ENCODE measurements at regions of chr1 and their contacts with region 1.

Region 1: DNA sequence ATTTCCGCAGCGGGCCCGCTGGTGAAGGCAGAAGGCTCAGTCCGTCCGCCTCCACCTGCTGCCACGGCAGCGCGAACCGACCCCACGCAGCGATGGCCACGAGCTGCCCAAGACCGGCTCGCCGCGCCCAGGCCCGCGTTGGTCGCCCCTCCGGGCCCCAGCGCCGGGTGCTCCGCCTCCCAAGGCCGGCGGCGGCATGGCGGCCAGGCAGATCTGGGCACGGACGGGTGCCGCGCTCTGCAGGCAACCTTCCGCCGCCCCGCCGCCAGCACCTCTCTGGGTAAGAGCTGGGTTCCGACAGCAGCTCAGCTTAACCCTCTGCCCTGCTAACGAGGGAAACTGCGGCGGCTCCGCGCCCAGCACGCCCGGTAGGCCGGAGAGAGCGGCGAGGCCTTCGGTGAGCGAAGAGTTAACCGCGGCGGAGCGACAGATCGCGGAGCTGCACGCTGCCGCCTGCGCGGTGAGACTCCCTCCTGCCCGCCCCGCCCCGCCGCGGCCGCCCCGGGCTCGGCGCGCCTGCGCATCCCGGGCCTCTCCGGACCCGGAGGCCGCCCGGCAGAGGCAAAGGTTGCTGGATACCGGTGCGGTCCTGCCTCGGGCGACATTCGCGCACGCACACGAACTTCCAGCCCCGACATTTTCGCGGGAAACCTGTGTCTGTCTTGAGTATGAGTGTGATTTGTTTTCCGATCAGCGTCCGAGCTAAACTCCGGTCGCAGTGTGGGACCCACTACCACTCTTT is at the start of gene C1orf53:
- DNase-seq: peak; percentile 92
- H3K4me3 Mint-ChIP-seq: peak within 1 kb of the TSS; percentile 86
- H3K27ac Mint-ChIP-seq: peak within 1 kb of the TSS; percentile 93
- H3K4me1 Mint-ChIP-seq: peaks cover 26% of the 10 kb centered on the region
- H3K27me3 Mint-ChIP-seq: no peaks in the 10 kb centered on the region
- CTCF ChIP-seq: no peak
- total RNA-seq, gene C1orf53: 10.7 and 15.1 TPM in 2 replicates

Region 2: DNA sequence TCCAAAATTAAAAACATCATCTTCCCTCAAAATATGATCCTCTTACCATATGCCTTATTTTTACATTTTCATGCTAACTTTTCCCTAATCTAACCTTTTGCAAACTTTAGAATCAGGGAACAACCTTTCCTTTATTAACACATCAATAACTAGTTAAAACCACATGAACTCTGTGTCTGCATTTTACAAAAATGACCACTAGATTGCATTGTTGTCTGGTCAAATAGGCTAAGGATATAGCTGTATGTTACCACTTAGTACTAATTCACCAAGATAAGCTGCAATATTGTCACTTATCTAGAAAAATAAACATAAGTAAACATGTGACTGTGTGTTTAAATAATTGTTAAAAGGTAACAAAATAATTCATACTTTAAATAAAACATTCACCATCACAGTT is 209.7 kb before region 1 on chr1:
- CTCF ChIA-PET with region 1: interaction called, 4 read pairs
- POLR2A ChIA-PET with region 1: interaction called, 22 read pairs
- intact Hi-C with region 1: no loop called
- DNase-seq: peak; percentile 46
- H3K4me3 Mint-ChIP-seq: no peak overlapping the region
- H3K27ac Mint-ChIP-seq: no peak overlapping the region
- H3K4me1 Mint-ChIP-seq: peaks cover 19% of the 10 kb centered on the region
- H3K27me3 Mint-ChIP-seq: no peaks in the 10 kb centered on the region
- CTCF ChIP-seq: peak; percentile 61

Region 3: GRCh38 chr1:197884173-197884572 is 18.5 kb before region 1 on chr1:
- CTCF ChIA-PET with region 1: interaction called, 7 read pairs
- POLR2A ChIA-PET with region 1: interaction called, 12 read pairs
- intact Hi-C with region 1: no loop called
- DNase-seq: no peak
- H3K4me3 Mint-ChIP-seq: no peak overlapping the region
- H3K27ac Mint-ChIP-seq: no peak overlapping the region
- H3K4me1 Mint-ChIP-seq: no peaks in the 10 kb centered on the region
- H3K27me3 Mint-ChIP-seq: no peaks in the 10 kb centered on the region
- CTCF ChIP-seq: no peak

Region 4: DNA sequence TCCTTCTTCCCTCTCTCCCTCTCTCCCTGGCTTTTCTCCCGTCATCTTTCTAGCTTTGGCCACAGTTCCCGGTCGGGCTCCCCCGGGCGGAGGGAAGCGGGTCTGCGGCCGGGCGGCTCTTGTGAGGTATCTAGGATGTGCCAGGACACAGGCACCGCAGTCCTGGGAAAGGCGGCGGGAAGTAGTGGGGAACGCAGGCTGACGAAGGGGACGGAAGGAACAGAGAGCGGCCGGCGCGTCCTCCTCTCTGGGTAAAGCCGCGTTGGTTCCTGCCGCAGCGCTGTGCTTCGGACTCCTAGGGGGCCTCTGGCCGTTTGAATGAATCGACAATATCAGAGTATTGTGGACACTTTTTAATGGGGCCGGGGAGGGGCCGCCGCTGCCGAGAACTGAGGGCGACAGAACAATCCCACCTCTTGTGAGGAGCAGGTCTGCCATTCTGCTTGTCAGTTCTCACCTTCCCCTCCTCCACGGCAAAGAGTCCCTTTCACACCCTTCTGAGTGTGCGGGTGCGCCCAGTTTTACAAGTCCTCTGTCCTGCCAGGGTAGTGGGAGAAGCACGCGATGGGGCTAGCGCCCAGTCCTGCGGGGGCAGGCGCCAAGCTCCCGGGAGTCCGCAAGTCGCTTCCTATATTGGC is 13.4 kb after region 1 on chr1:
- CTCF ChIA-PET with region 1: interaction called, 44 read pairs
- POLR2A ChIA-PET with region 1: interaction called, 34 read pairs
- intact Hi-C with region 1: no loop called
- DNase-seq: peak; percentile 66
- H3K4me3 Mint-ChIP-seq: peak overlapping the region; percentile 59
- H3K27ac Mint-ChIP-seq: no peak overlapping the region
- H3K4me1 Mint-ChIP-seq: peaks cover 19% of the 10 kb centered on the region
- H3K27me3 Mint-ChIP-seq: no peaks in the 10 kb centered on the region
- CTCF ChIP-seq: peak; percentile 61